Activated CD8-positive, alpha-beta T cell treated with anti-CD3 and anti-CD28 coated beads for 36 hours (primary cell): ENCODE measurements at regions of chr12 and their contacts with region 1.

Region 1: DNA sequence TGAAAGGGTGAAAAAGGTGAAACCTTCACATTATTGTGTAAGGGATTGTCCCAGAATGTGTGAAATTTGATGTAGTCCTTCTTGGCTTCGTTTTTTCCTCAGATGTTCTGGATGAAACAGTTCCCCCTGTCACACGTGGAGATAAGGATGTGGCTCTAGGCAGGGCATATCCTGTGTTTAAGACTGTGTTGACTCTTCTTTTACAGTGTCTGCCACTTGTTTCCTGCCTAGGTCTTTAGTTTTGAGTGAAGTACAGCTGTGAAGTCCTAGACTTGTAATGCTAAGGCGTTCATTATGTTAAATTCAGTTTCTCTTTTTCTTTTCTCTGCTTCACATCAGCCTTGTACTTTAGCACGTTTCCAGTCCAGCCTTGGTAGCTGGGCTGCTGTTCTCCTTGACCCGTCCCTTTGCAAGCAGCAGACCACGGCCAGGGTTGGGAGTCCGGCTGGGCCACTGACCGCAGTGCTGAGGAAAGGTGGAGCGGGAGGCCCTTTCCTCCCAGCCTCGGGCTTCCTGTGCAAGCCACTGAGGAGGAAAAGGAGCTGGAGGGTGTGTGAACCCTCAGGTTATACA is 59.1 kb downstream of the RASSF3 start:
- DNase-seq: peak; percentile 43
- ATAC-seq: peak; percentile 78
- H3K4me3 Mint-ChIP-seq: peak overlapping the region; percentile 82
- H3K27ac Mint-ChIP-seq: peak overlapping the region; percentile 96
- H3K4me1 Mint-ChIP-seq: peaks cover 90% of the 10 kb centered on the region
- H3K27me3 Mint-ChIP-seq: no peaks in the 10 kb centered on the region
- CTCF ChIP-seq: no peak

Region 2: GRCh38 chr12:64500394-64500793 is 169.0 kb before region 1 on chr12:
- CTCF ChIA-PET with region 1: no interaction called
- POLR2A ChIA-PET with region 1: no interaction called
- intact Hi-C with region 1: no loop called
- DNase-seq: no peak
- ATAC-seq: no peak
- H3K4me3 Mint-ChIP-seq: no peak overlapping the region
- H3K27ac Mint-ChIP-seq: no peak overlapping the region
- H3K4me1 Mint-ChIP-seq: peaks cover under 1% of the 10 kb centered on the region
- H3K27me3 Mint-ChIP-seq: no peaks in the 10 kb centered on the region
- CTCF ChIP-seq: no peak

Region 3: GRCh38 chr12:64610149-64610678 is 59.1 kb before region 1 on chr12 and contains the start of gene RASSF3:
- CTCF ChIA-PET with region 1: interaction called, 5 read pairs
- POLR2A ChIA-PET with region 1: interaction called, 9 read pairs
- intact Hi-C with region 1: loop called (anchors 2 kb)
- DNase-seq: peak; percentile 77
- ATAC-seq: peak; percentile 65
- H3K4me3 Mint-ChIP-seq: peak within 1 kb of the TSS; percentile 96
- H3K27ac Mint-ChIP-seq: peak within 1 kb of the TSS; percentile 96
- H3K4me1 Mint-ChIP-seq: peaks cover 34% of the 10 kb centered on the region
- H3K27me3 Mint-ChIP-seq: no peaks in the 10 kb centered on the region
- CTCF ChIP-seq: no peak
- total RNA-seq, gene RASSF3: 40.4 to 41.6 TPM

Region 4: DNA sequence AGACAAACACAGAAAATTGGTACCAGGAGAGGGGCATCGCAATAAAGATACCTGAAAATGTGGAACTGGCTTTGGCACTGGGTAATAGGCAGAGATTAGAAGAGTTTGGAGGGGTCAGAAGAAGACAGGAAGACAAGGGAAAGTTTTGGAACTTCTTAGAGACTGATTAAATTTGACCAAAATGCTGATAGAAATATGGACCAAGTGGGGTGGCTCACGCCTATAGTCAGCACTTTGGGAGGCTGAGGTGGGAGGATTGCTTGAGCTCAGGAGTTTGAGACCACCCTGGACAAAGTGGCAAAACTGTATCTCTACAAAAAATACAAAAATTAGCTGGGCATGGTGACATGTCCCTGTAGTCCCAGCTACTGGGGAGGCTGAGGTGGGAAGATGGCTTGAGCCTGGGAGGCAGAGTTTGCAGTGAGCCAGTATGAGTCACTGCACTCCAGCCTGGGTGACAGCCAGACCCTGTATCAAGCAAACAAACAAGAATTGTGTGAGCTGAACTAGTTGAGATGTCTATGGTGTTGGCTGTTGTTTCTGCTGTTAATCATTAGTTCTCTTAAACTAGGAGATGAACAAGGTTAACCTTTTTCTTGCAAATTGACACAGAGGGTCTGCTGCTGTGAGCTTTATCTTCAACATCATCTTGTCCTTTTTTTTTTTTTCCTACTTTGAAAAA is 35.6 kb before region 1 on chr12:
- CTCF ChIA-PET with region 1: no interaction called
- POLR2A ChIA-PET with region 1: interaction called, 3 read pairs
- intact Hi-C with region 1: loop called (anchors 5 kb)
- DNase-seq: peak; percentile 33
- ATAC-seq: peak; percentile 50
- H3K4me3 Mint-ChIP-seq: no peak overlapping the region
- H3K27ac Mint-ChIP-seq: peak overlapping the region; percentile 80
- H3K4me1 Mint-ChIP-seq: peaks cover 70% of the 10 kb centered on the region
- H3K27me3 Mint-ChIP-seq: no peaks in the 10 kb centered on the region
- CTCF ChIP-seq: no peak

Region 5: DNA sequence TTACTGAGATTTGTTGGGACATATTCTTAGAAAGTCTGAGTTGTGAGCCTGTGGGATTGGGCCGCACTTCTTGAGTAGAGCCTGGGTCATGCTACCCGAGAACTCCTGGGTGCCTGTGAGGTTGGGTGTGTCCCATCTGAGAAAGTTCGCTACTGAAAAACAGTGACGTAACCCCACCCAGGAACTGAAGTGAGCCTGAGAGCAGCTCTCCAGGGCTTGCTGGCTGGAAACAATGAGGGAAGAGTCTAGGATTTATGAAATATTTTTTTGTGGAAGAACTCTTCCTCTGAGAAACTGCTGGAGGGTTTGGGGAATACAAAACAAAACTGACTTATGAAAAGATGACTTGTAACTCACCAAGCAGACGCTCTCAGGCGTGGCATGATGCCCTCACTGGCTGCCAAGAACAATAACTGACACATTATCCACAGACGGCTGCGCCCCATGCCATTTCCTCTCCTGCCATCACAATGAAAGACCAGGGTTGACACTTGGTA is 10.2 kb after region 1 on chr12:
- CTCF ChIA-PET with region 1: interaction called, 13 read pairs
- POLR2A ChIA-PET with region 1: interaction called, 32 read pairs
- intact Hi-C with region 1: no loop called
- DNase-seq: peak; percentile 83
- ATAC-seq: peak; percentile 68
- H3K4me3 Mint-ChIP-seq: peak overlapping the region; percentile 54
- H3K27ac Mint-ChIP-seq: peak overlapping the region; percentile 88
- H3K4me1 Mint-ChIP-seq: peaks cover 89% of the 10 kb centered on the region
- H3K27me3 Mint-ChIP-seq: no peaks in the 10 kb centered on the region
- CTCF ChIP-seq: no peak